Caco-2 (cell line): ENCODE measurements at regions of chr18 and their contacts with region 1.

Region 1: DNA sequence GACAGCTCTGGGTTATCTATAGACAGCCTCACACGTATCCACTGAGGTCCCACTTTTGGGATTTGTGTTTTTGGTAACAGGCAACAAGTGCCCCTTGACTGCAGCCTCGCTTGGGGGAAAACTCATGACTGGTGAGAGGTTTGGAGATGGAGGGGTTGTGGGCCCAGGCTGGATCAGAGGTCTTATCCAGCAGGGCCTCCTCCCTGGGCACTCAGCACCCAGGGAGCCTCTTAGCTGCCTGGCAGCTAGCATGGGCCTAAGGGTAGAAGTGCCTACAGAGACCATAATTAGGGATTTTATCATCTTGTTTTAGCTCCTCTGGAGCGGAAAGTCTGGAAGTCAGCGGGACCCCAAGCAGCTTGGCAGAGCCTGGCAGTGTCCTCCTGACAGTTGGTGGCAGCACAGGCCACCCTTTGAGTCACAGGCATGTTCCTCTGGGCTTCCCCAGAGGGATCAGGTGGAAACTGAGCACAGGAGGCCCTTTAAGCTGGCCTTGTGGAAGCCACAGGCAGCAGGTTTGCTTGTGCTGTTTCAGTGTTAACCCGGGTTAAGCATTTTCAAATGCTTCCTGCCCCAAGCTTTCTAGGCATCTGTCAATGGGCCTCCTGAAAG is 143.1 kb downstream of the KCTD1 start:
- DNase-seq: peak; percentile 34 to 35
- H3K4me3 ChIP-seq: no peak overlapping the region
- H3K4me3 Mint-ChIP-seq: no peak overlapping the region
- H3K27ac Mint-ChIP-seq: no peak overlapping the region
- H3K4me1 ChIP-seq: no peaks in the 10 kb centered on the region
- H3K4me1 Mint-ChIP-seq: no peaks in the 10 kb centered on the region
- H3K27me3 ChIP-seq: no peaks in the 10 kb centered on the region
- H3K27me3 Mint-ChIP-seq: no peaks in the 10 kb centered on the region
- CTCF ChIP-seq: no peak

Region 2: DNA sequence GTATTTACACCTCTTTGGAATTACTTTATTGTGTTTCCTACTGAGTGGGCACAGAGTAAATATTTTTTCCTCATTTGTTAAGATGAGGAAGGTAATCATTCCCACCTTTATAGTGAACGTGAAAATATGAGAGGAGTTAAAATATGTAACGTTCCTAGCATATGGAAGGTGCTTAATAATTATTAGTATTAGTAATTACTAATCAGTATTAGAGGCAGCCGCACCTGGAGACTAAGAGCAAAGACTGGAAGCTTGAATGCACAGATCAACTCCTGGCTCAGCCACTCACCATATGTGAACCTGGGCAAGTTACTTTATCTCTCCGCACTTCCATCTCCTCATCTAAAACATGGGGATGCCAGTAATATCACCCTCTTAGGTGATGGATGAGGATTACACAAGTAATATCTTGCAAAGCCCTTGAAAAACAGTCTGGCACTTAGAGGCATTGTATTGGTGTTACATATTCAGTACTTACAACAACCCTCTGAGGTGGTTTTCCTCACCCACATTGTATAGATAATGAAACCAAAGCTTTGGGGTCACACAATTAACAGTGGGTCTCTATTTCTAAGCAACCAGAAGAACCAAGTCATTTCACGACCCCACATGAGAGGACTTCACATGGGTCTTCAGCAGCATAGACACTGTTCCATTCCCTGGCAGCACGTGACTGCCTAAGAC is 243.4 kb after region 1 on chr18:
- CTCF ChIA-PET with region 1: interaction called, 4 read pairs
- POLR2A ChIA-PET with region 1: no interaction called
- intact Hi-C with region 1: loop called (anchors 1 kb)
- DNase-seq: no peak
- H3K4me3 ChIP-seq: no peak overlapping the region
- H3K4me3 Mint-ChIP-seq: no peak overlapping the region
- H3K27ac Mint-ChIP-seq: no peak overlapping the region
- H3K4me1 ChIP-seq: no peaks in the 10 kb centered on the region
- H3K4me1 Mint-ChIP-seq: no peaks in the 10 kb centered on the region
- H3K27me3 ChIP-seq: no peaks in the 10 kb centered on the region
- H3K27me3 Mint-ChIP-seq: peaks cover 13% of the 10 kb centered on the region
- CTCF ChIP-seq: no peak